ENCODE measurements at regions of chr5 and their contacts with region 1.

Region 1: DNA sequence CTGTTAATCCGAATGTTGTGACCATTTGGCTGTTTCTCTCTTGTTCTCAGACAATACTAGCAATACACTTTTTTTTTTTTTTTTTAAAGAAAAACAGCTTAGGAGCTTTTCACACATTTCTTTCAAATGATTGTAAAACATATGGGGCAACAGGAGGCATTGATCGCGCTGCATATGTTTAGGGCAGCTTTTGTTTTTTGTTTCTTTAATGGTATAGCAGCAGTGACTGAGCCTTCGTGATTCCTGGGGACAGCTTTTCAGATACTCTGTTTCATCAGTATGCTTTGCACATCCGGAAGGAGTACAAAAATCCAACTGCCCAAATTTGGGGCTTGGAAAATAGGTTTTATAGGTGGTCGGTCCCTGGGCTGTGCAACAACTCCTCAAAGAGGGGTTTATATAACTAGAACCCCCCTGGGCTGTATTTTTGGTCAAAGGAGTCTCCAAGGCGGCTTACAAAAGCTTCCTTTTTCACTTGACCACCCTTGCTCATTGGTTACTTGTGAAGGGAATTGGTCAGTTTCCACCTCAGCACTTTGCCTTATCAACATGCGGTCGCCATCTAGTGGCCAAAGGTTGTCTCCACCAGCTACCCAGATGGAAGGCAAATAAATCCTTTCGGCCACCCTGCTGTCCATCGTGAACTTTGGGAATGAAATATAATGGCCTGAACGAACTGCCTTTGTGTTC is 91.8 kb downstream of the PDE6A start:
- DNase-seq: peak; percentile 91
- H3K4me3 Mint-ChIP-seq: no peak overlapping the region
- H3K27ac Mint-ChIP-seq: peak overlapping the region; percentile 16
- H3K4me1 Mint-ChIP-seq: peaks cover 17% of the 10 kb centered on the region
- H3K27me3 Mint-ChIP-seq: no peaks in the 10 kb centered on the region
- CTCF ChIP-seq: peak; percentile 87

Region 2: GRCh38 chr5:149913436-149914419 is 60.9 kb after region 1 on chr5:
- CTCF ChIA-PET with region 1: interaction called, 16 read pairs
- POLR2A ChIA-PET with region 1: interaction called, 4 read pairs
- intact Hi-C with region 1: no loop called
- DNase-seq: no peak
- H3K4me3 Mint-ChIP-seq: no peak overlapping the region
- H3K27ac Mint-ChIP-seq: no peak overlapping the region
- H3K4me1 Mint-ChIP-seq: peaks cover 57% of the 10 kb centered on the region
- H3K27me3 Mint-ChIP-seq: no peaks in the 10 kb centered on the region
- CTCF ChIP-seq: no peak

Region 3: DNA sequence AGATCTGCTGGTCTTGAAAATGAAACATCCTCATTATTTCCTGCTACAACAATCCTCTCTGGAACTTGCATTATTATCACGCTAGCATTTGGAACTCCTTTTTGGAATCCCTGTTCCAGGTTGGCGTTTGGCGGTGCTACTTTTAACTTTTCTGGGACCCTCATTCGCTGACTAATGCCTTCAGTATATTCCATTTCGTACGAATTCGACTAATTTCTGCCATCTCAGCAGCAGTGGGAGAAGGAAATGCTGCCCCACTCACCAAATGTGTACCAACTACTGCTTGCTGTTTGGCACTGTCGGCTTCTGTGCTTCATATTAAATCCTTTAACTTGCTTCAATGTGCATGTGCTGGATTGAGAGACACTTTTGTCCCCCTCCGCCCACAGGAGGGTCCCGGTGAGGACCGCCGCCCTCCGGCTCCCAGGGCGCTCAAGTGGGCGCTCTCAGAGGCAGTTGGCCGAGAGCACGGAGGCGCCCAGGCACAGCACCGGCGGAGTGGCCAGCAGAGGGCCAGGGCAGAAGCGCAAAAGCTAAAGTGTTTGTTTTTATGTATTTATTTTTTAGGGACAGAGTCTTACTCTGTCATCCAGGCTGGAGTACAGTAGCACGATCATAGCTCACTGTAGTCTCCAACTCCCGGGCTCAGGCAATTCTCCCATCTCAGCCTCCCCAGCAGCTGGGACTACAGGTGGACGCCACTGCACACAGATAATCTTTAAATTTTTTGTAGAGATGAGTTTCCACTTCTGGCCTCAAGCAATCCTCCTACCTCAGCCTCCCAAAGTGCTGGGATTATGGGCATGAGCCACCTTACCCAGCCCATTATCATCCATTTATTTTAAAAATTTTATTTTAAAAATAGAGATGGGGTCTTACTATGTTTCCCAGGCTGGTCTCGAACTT is 79.9 kb after region 1 on chr5:
- CTCF ChIA-PET with region 1: interaction called, 22 read pairs
- POLR2A ChIA-PET with region 1: interaction called, 12 read pairs
- intact Hi-C with region 1: no loop called
- DNase-seq: no peak
- H3K4me3 Mint-ChIP-seq: no peak overlapping the region
- H3K27ac Mint-ChIP-seq: no peak overlapping the region
- H3K4me1 Mint-ChIP-seq: peaks cover 51% of the 10 kb centered on the region
- H3K27me3 Mint-ChIP-seq: no peaks in the 10 kb centered on the region
- CTCF ChIP-seq: no peak

Region 4: DNA sequence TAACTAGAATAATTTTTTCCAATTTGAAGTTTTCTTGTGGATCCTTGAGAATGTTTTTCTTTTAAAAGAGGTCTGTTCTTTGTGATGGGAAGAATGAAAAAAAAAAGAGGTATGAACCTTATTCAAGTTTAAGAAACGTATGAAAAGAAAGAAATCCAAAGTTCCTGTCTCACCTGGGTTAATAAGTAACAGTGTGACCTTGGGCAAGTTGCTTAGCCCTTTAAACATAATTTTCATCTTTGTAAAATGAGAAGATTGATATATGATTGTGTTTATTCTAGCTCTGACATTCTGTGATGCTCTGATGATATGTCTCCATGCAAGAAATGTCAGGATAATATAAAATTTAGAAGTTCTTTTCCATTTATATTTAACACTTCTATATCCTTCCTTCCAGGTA is 127.1 kb after region 1 on chr5:
- CTCF ChIA-PET with region 1: interaction called, 20 read pairs
- POLR2A ChIA-PET with region 1: interaction called, 4 read pairs
- intact Hi-C with region 1: no loop called
- DNase-seq: no peak
- H3K4me3 Mint-ChIP-seq: no peak overlapping the region
- H3K27ac Mint-ChIP-seq: no peak overlapping the region
- H3K4me1 Mint-ChIP-seq: peaks cover 22% of the 10 kb centered on the region
- H3K27me3 Mint-ChIP-seq: no peaks in the 10 kb centered on the region
- CTCF ChIP-seq: no peak

Region 5: GRCh38 chr5:150000256-150000989 is 147.6 kb after region 1 on chr5 and contains the starts of genes HMGXB3 and TIGD6:
- CTCF ChIA-PET with region 1: interaction called, 13 read pairs
- POLR2A ChIA-PET with region 1: interaction called, 3 read pairs
- intact Hi-C with region 1: no loop called
- DNase-seq: peak; percentile 92
- H3K4me3 Mint-ChIP-seq: peak within 1 kb of the TSS; percentile 82
- H3K27ac Mint-ChIP-seq: peak within 1 kb of the TSS; percentile 95
- H3K4me1 Mint-ChIP-seq: peaks cover 43% of the 10 kb centered on the region
- H3K27me3 Mint-ChIP-seq: no peaks in the 10 kb centered on the region
- CTCF ChIP-seq: no peak
- total RNA-seq, gene HMGXB3: 66.8 and 67.8 TPM in 2 replicates
- total RNA-seq, gene TIGD6: 9.0 and 10.6 TPM in 2 replicates

Measured in MCF 10A (cell line).